PC-9 (cell line): ENCODE measurements at regions of chr1 and their contacts with region 1.

Region 1: DNA sequence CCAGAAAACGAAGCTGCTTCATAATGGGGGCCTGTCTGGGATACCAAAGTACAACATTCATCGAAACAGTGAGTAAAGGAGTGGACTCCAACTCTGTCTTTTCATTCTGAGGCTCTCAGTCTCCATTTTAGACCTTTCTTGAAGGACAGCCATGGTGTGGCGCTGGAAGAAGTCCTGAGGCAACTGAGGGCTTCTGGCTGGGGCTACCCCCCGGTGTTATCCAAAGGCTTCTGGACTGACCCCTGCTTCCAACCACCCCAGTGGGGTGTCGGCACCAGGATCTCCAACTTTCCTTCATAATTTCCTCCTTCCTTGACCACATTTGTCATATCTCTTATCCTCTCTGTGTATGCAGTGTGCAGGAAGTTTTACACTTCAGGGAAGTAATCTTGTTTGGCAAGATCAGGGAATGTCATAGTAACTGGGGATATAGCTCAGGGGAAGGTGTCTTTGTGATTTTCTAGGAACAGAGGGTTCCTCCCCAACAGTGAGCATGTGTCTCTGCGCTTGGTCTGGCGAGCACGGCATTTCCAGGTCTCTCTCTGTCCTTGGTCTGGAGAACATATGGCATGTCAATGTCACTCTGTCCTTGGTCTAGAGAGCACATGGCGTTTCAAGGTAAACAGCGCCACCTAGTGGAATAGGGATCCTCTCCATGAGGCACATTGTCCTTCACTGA is 19.4 kb upstream of the BSDC1 start:
- DNase-seq: peak; percentile 50 to 63
- H3K4me3 ChIP-seq: no peak overlapping the region
- H3K27ac ChIP-seq: no peak overlapping the region
- H3K4me1 ChIP-seq: no peaks in the 10 kb centered on the region
- H3K27me3 ChIP-seq: 0 out of 2 replicates have a peak, but pooled peaks cover 7% of the 10 kb centered on the region
- CTCF ChIP-seq: peak; percentile 97

Region 2: GRCh38 chr1:32386676-32387392 is 26.8 kb before region 1 on chr1:
- CTCF ChIA-PET with region 1: no interaction called
- POLR2A ChIA-PET with region 1: no interaction called
- intact Hi-C with region 1: no loop called
- DNase-seq: no peak
- H3K4me3 ChIP-seq: no peak overlapping the region
- H3K27ac ChIP-seq: no peak overlapping the region
- H3K4me1 ChIP-seq: no peaks in the 10 kb centered on the region
- H3K27me3 ChIP-seq: no peaks in the 10 kb centered on the region
- CTCF ChIP-seq: no peak

Region 3: GRCh38 chr1:32400876-32401631 is 12.6 kb before region 1 on chr1:
- CTCF ChIA-PET with region 1: no interaction called
- POLR2A ChIA-PET with region 1: no interaction called
- intact Hi-C with region 1: loop called (anchors 1 kb)
- DNase-seq: peak; percentile 62 to 77
- H3K4me3 ChIP-seq: no peak overlapping the region
- H3K27ac ChIP-seq: no peak overlapping the region
- H3K4me1 ChIP-seq: peaks cover 4% of the 10 kb centered on the region
- H3K27me3 ChIP-seq: no peaks in the 10 kb centered on the region
- CTCF ChIP-seq: peak; percentile 95